Prostate gland (tissue), 2 donors: ENCODE measurements at regions of chr1 and their contacts with region 1.

Region 1: DNA sequence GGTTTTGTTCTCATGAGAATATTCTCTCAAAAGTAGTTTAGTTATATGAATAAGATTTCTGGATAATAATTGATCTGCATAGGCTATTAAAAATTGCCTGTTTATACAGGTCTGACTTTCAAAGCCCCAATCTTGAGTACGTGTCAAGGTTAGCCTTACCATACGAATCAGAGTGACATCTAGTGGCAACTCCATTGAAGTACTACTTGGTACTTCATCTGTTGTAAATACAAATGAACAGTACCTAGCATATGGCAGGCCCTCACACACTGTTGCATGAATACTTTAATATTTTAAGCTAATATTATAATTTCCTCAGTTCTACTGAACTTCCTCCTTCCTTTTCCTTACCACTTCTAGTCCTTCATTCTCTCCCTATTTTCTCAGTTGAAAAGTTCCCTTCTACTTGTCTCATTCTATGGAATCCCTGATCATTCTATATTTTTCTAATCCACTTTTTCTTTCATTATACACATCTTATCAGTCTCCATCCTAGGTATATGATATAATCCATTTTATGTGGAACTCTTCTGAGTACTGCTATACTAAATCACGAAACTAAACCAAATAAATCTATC is 101.2 kb downstream of the AKT3 start:
- DNase-seq: peak; percentile 61
- H3K4me3 ChIP-seq: no peak overlapping the region
- H3K27ac ChIP-seq: no peak overlapping the region
- H3K4me1 ChIP-seq: no peaks in the 10 kb centered on the region
- H3K27me3 ChIP-seq: no peaks in the 10 kb centered on the region
- CTCF ChIP-seq: peak; percentile 63 to 77 (median 72)
- POLR2A ChIP-seq: no peak

Region 2: GRCh38 chr1:243343970-243344937 is 404.5 kb before region 1 on chr1:
- intact Hi-C with region 1: loop called (anchors 5 kb)
- DNase-seq: no peak
- H3K4me3 ChIP-seq: no peak overlapping the region
- H3K27ac ChIP-seq: no peak overlapping the region
- H3K4me1 ChIP-seq: no peaks in the 10 kb centered on the region
- H3K27me3 ChIP-seq: no peaks in the 10 kb centered on the region
- CTCF ChIP-seq: peak; percentile 51 to 87 (median 76)
- POLR2A ChIP-seq: no peak

Region 3: GRCh38 chr1:243482141-243483022 is 266.4 kb before region 1 on chr1:
- intact Hi-C with region 1: loop called (anchors 5 kb)
- DNase-seq: no peak
- H3K4me3 ChIP-seq: peak overlapping the region; percentile 40 to 48
- H3K27ac ChIP-seq: no peak overlapping the region
- H3K4me1 ChIP-seq: no peaks in the 10 kb centered on the region
- H3K27me3 ChIP-seq: no peaks in the 10 kb centered on the region
- CTCF ChIP-seq: no peak
- POLR2A ChIP-seq: no peak

Region 4: DNA sequence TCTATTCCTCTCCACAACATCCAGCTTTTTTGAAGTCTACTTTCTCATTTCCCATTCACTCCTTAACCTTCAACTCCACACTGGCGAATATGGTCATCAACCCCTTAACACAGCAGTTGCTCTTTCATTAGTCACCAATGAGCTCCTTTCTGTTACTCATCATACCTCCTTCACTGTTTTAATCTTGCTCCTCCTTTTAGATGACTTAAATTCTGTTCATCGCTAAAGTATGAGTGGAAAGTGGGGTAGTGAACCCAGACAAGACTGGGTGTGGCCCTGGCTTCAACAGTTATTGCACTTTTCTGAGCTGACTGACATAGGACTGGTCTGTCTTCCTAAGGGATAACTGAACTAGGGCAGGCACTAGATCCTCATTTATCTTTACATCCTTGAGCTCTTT is 49.9 kb after region 1 on chr1:
- intact Hi-C with region 1: no loop called
- DNase-seq: no peak
- H3K4me3 ChIP-seq: no peak overlapping the region
- H3K27ac ChIP-seq: no peak overlapping the region
- H3K4me1 ChIP-seq: no peaks in the 10 kb centered on the region
- H3K27me3 ChIP-seq: no peaks in the 10 kb centered on the region
- CTCF ChIP-seq: no peak
- POLR2A ChIP-seq: no peak